HEK293 (cell line): ENCODE measurements at regions of chr6 and their contacts with region 1.

Region 1: DNA sequence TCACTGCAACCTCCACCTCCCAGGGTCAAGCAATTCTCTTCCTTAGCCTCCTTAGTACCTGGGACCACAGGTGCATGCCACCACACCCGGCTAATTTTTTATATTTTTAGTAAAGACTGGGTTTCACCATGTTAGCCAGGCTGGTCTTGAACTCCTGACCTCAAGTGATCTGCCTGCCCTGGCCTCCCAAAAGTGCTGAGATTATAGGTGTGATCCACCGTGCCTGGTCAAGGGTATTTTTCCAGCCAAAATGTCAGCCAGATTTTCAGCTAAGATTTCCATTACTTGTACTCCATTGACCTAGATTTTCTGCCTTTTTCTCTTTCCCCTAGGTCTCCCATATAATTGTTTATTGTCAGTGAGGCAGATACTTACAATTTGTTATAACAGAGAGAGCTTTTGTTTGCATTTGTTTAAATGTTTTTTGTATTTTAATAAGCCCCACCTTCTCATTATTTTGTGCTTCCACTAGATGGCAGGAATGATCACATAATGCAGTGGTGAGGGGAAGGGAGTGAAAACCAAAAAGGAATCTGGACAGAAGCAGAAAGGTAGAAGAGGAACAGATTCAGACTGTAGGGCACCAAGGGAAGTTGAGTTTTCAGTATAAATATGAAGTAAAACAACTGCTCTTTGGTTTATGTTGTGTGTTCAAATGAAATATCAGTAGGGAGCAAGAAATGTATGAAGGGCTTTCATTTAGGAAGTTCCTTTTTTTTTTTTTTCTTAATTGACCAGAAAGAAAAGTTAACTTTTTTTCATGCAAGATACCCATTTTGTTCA is 29.7 kb downstream of the RPF2 start:
- H3K4me3 ChIP-seq: no peak overlapping the region
- H3K27ac ChIP-seq: no peak overlapping the region
- H3K4me1 ChIP-seq: no peaks in the 10 kb centered on the region
- CTCF ChIP-seq: peak; percentile 71

Region 2: DNA sequence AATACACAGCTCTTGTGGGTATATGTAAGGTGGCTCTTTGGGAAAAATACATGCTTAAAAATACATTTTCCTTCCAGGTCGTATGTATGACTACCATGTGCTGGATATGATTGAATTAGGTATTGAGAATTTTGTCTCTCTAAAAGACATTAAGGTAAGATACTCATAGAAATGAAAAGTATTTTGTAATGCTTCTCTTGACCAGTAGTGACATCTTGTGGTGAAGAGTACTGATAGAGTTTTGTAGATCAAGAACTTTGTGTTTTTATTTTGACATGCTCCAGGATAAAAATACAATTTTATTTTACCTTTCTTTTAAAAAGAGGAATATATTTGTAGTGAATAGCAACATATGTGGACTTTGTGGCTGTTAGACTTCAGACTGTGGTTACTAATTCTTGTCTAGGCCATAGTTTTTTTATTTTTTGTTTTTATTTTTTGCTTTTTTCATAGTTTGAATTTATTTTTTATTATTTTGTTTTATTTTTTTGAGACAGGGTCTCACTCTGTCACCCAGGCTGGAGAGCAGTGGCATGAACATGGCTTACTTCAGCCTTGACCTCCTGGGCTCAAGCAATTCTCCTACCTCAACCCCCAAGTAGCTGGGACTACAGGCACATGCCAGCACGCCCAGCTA is 11.8 kb before region 1 on chr6:
- CTCF ChIA-PET with region 1: interaction called, 19 read pairs
- POLR2A ChIA-PET with region 1: interaction called, 3 read pairs
- H3K4me3 ChIP-seq: no peak overlapping the region
- H3K27ac ChIP-seq: no peak overlapping the region
- H3K4me1 ChIP-seq: no peaks in the 10 kb centered on the region
- CTCF ChIP-seq: no peak

Region 3: DNA sequence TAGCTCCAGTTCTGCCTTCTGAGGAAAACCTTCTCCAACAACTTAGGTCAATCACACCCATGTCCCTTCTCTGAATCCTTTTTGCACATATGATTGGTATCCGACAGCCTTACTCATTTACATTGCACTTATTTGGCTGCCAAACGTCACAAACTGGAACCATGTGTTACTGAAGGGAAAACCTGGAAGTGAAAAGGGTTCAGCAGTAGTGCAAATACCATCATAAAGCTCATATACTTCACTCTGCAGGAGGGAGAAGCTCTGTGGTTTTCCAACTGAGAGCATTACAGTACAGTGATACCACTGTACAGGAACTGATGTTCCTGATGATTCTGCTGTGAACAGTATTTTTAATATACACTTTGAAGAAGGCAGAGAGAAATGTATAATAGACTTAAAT is 163.6 kb after region 1 on chr6:
- CTCF ChIA-PET with region 1: interaction called, 11 read pairs
- POLR2A ChIA-PET with region 1: no interaction called
- H3K4me3 ChIP-seq: no peak overlapping the region
- H3K27ac ChIP-seq: no peak overlapping the region
- H3K4me1 ChIP-seq: peaks cover 4% of the 10 kb centered on the region; the same call in 1 of the 2 replicates
- CTCF ChIP-seq: no peak

Region 4: DNA sequence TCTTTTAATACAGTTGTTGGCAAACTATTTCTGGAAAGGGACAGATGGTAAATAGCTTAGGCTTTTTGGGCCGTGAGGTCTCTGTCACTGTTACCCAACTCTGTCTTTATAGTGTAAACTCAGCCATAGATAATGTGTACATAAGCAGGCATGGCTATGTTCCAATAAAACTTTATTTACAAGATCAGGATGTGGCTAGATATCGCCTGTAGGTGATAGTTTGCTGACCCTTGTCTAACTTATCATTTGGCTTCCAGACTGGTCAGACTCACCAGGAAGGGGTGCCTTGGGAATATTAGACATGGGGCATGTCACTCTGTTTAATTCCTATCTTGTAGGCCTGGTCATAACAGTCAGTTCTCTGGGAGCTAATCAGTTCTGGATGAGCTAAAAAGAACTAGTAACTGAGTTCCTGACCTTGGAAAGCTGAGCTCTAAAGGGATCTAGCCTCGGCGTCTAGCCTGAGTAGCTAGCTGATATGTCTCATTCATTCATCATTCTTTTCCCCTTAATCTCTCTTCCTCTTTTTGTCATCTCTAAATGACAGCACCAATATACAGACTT is 239.3 kb after region 1 on chr6:
- CTCF ChIA-PET with region 1: interaction called, 10 read pairs
- POLR2A ChIA-PET with region 1: no interaction called
- H3K4me3 ChIP-seq: no peak overlapping the region
- H3K27ac ChIP-seq: no peak overlapping the region
- H3K4me1 ChIP-seq: no peaks in the 10 kb centered on the region
- CTCF ChIP-seq: no peak

Region 5: GRCh38 chr6:112043032-112044007 is 1031.8 kb after region 1 on chr6:
- CTCF ChIA-PET with region 1: interaction called, 11 read pairs
- POLR2A ChIA-PET with region 1: no interaction called
- H3K4me3 ChIP-seq: peak overlapping the region; percentile 66
- H3K27ac ChIP-seq: peak overlapping the region; percentile 27; the same call in 1 of the 2 replicates
- H3K4me1 ChIP-seq: no peaks in the 10 kb centered on the region
- CTCF ChIP-seq: peak; percentile 86